ENCODE measurements at regions of chr2 and their contacts with region 1.

Region 1: DNA sequence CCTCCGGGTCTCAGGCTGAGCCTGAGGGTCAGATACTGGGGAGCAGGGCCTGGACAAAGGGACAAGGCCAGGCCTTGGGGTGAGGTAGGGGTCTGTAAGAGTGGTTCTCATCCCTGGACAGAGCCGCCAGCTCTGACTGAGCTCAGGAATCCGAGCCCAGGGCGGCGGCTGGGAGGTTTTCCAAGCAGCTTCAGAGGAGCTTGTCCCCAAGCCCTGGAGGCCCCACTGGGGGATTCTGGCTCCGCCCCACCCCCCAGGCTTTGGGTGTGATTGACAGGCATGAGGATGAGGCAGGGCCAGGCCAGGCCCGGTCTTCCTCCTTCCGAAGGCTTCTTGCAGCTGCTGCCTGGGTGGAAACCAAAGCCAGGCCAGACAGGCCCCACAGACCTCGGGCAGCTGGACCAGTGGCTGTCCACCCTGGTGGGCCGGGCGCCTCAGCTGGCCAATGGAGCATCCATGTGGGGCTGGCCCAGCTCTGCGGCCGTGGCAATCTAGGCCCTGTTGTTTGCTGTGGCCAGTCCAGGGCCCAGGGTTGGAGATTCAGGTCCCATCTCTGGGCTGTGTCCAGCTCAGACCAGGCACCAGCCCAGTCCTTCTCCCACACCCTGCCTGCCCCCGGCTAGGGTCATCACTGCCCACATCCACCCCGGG is 23.1 kb upstream of the GPC1 start:
- DNase-seq: no peak
- ATAC-seq: peak; percentile 45; the same call in 1 of the 2 replicates
- H3K4me3 ChIP-seq: no peak overlapping the region
- H3K27ac ChIP-seq: no peak overlapping the region
- H3K4me1 ChIP-seq: no peaks in the 10 kb centered on the region
- H3K27me3 ChIP-seq: no peaks in the 10 kb centered on the region; the same call in none of the 2 replicates
- CTCF ChIP-seq: no peak

Region 2: DNA sequence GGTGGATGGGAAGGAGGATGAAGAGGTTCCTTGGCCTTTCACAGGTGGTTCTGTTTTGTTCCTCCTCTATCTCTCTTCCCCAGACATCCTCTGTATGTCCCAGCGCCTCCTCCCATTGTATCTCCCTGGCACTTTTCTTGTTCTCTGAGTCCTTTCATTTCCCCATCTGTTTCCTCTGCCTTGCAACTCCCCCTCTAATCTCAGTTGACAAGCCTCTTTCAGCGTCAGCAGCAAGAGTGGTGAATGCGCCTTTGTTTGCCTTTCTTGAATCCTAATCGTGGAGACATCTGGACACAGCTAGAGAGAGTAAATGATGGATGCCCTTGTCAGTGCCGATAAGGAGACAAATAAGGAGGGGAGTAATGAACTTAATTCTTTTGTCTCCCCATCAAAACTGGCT is 554.2 kb before region 1 on chr2:
- CTCF ChIA-PET with region 1: no interaction called
- POLR2A ChIA-PET with region 1: no interaction called
- in situ Hi-C with region 1: no loop called
- intact Hi-C with region 1: no loop called
- DNase-seq: no peak
- ATAC-seq: no peak
- H3K4me3 ChIP-seq: no peak overlapping the region
- H3K27ac ChIP-seq: no peak overlapping the region
- H3K4me1 ChIP-seq: no peaks in the 10 kb centered on the region
- H3K27me3 ChIP-seq: peaks cover 24% of the 10 kb centered on the region
- CTCF ChIP-seq: no peak

Region 3: GRCh38 chr2:240425236-240425615 is 12.9 kb after region 1 on chr2:
- CTCF ChIA-PET with region 1: no interaction called
- POLR2A ChIA-PET with region 1: interaction called, 10 read pairs
- in situ Hi-C with region 1: no loop called
- intact Hi-C with region 1: no loop called
- DNase-seq: no peak
- ATAC-seq: no peak
- H3K4me3 ChIP-seq: no peak overlapping the region
- H3K27ac ChIP-seq: no peak overlapping the region
- H3K4me1 ChIP-seq: no peaks in the 10 kb centered on the region
- H3K27me3 ChIP-seq: no peaks in the 10 kb centered on the region
- CTCF ChIP-seq: no peak

Region 4: DNA sequence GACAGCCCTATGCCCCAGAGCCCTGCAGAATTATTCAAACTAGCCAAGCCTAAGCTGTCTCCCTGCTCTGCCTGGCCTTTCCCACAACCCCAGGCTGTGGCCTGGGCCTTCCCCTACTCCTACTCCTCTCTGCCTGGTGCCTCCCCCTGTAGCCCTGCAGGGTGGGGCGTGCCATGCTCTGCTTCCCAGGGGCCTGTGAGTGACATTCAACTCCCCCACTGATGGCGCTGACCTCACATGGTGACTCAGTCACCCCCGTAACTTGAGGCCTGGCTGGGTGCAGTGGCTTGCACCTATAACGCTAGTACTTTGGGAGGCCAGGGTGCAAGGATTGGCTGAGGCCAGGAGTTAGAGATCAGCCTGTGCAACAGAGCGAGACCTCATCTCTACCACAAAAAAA is 347.1 kb after region 1 on chr2:
- CTCF ChIA-PET with region 1: no interaction called
- POLR2A ChIA-PET with region 1: no interaction called
- in situ Hi-C with region 1: no loop called
- intact Hi-C with region 1: no loop called
- DNase-seq: no peak
- ATAC-seq: peak; percentile 40
- H3K4me3 ChIP-seq: no peak overlapping the region
- H3K27ac ChIP-seq: no peak overlapping the region
- H3K4me1 ChIP-seq: no peaks in the 10 kb centered on the region
- H3K27me3 ChIP-seq: no peaks in the 10 kb centered on the region
- CTCF ChIP-seq: no peak